Transverse colon (tissue), 4 donors: ENCODE measurements at regions of chr19 and their contacts with region 1.

Region 1: DNA sequence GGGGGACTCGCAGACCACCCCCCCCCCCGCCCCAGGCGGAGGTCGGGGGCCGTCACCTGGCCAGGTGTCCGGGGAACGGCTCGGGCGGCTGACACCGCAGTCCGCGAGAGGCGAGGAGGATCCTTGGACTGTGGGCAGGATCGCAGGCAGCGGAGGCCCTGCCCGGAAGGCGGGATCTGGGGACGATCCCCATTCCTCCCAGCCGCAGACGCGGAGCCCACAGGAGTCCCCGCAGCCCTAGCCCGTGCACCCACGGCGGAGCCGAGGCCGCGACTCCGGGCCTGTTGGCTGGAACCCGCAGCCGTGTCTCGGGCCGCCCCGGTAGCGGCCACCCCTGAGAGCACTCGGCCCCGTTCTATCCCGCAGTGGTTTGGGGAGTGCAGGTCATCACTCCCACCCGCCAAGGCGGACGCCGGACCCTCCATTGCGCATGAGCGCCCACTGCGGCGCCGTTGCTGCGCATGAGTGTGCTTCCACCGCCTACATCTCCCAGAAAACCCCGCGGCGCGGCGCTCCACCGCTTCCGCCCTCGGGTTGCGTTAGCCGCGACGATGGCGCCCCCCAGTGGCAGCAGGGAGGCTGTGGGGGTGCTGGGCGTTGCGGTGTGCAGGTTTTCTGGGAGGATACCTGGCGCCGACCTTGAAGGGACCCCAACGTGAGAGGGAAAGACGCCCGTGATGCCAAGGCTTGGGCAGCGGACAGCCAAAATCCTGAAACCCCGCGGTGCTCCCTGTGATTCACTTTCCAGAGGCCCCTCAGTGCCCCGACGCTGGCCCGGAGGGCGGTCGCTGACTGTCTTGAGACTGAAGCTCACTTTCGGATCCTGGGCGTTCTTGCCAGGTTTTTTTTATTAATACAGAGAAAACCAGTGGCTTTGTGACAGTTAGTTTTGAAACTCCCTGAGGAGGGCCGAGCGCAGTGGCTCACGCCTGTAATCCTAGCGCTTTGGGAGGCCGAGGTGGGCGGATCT is 4.4 kb upstream of the ZNF329 start:
- DNase-seq: peak; percentile 97
- H3K4me3 ChIP-seq: peak overlapping the region; percentile 14 to 97 (median 66)
- H3K27ac ChIP-seq: peak overlapping the region; percentile 83 to 93 (median 89)
- H3K4me1 ChIP-seq: peaks cover 0 to 27% (median 17%) of the 10 kb centered on the region in 4 donors
- H3K27me3 ChIP-seq: no peaks in the 10 kb centered on the region
- CTCF ChIP-seq: peak; percentile 97 to 99 (median 98)
- EP300 ChIP-seq: no peak
- POLR2A ChIP-seq: peak; percentile 71

Region 2: GRCh38 chr19:57746580-57747471 is 408.1 kb before region 1 on chr19 and contains the start of gene ZNF776:
- in situ Hi-C with region 1: loop called in 1 of 4 experiments (anchors 10 kb)
- intact Hi-C with region 1: no loop called
- DNase-seq: peak; percentile 85
- H3K4me3 ChIP-seq: peak within 1 kb of the TSS; percentile 58 to 92 (median 84)
- H3K27ac ChIP-seq: peak within 1 kb of the TSS; percentile 81 to 89 (median 88)
- H3K4me1 ChIP-seq: peaks cover 0 to 14% (median 6%) of the 10 kb centered on the region in 4 donors
- H3K27me3 ChIP-seq: no peaks in the 10 kb centered on the region
- CTCF ChIP-seq: peak in 2 of 5 experiments; percentile 6 to 20
- EP300 ChIP-seq: no peak
- POLR2A ChIP-seq: peak; percentile 45
- total RNA-seq, gene ZNF776: 15.0 to 120 (median 16.7) TPM

Region 3: DNA sequence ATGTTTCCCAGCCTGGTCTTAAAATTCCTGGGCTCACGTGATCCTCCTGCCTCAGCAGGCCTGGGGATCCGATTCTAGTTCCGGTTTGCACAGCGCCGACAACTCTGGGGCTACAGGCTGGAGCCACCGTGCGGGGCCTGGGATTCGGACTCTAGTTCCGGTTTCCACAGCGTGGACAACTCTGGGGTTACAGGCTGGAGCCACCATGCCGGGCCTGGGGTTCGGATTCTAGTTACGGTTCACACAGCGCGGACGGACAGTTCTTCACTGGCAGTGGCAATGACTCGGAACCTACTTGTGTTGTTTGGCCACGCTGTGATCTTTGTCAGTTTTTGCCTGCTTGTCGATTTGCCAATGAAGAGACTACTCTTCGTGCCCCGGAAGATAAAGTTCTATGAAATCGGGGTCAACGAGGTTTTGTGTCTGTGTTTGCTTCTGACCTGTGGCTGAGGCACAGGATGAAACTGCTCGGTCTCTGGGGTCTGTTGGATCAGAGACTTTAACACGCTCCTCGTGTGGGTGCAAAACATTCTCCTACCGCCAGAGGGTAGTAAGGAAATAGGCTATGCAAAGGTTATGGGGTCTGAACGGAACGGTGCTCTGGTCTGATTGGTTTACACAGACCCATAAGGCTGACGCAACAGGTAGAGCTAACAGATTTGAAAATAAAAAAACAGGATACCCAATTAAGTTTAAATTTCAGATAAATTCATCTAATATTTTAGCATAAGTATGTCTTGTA is 133.3 kb before region 1 on chr19:
- in situ Hi-C with region 1: loop called in 1 of 4 experiments (anchors 10 kb)
- intact Hi-C with region 1: loop called (anchors 2 kb)
- DNase-seq: peak; percentile 27
- H3K4me3 ChIP-seq: no peak overlapping the region
- H3K27ac ChIP-seq: no peak overlapping the region
- H3K4me1 ChIP-seq: no peaks in the 10 kb centered on the region
- H3K27me3 ChIP-seq: no peaks in the 10 kb centered on the region
- CTCF ChIP-seq: peak; percentile 50 to 64 (median 54)
- EP300 ChIP-seq: no peak
- POLR2A ChIP-seq: no peak